Esophagus muscularis mucosa (tissue), 4 donors: ENCODE measurements at regions of chr4 and their contacts with region 1.

Region 1: DNA sequence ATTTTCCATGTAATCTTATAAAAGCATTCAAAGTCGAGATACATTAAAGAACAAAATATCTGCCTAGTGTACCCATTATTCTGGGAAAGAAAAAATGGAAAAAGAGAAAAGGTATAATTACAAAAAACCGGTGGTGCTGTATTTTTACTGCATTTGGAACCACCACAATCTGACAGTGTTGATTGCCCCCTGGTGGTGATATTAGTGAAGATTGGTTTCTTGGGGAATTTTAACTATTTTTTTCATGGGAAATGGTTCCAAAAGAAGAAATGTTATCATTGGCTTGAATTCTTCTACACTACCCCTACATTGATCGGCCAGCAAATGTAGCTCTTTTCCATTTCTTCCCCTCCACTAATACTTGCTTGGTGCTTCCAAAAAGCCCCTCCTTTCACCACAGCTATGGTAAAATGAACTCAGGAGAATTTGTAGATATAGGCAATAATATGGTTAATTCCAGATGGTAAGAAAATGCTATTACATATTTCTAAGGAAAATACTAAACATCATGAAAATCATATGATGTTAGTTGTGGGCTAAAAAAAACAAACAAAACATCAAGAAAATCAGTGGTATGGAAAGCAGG is 50.0 kb downstream of the COX18 start:
- DNase-seq: no peak
- H3K4me3 ChIP-seq: no peak overlapping the region
- H3K27ac ChIP-seq: no peak overlapping the region
- H3K4me1 ChIP-seq: no peaks in the 10 kb centered on the region
- H3K27me3 ChIP-seq: no peaks in the 10 kb centered on the region
- CTCF ChIP-seq: peak; percentile 62 to 76 (median 75)
- EP300 ChIP-seq: no peak
- POLR2A ChIP-seq: no peak

Region 2: DNA sequence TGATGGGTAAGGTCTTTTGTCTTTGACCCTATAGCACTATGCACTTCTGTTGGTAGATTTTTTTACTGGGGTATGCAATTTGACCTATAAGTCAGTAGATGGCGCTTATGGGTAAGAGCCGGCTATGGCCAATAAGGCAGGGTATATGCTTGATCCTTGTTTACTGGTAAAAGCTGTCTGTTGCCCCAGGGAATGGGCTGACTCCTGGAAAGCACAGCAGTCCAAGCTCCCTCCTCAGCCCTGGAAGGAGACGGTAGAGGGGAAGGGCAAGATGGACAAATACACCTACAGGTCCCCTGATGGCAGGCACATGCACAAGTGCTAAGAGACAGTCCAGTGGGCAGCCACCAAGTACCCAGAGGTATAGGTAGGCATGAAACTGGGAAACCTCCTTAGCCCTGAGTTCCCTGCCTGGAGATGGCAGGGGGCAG is 514.2 kb before region 1 on chr4:
- intact Hi-C with region 1: loop called (anchors 5 kb)
- DNase-seq: no peak
- H3K4me3 ChIP-seq: no peak overlapping the region
- H3K27ac ChIP-seq: no peak overlapping the region
- H3K4me1 ChIP-seq: no peaks in the 10 kb centered on the region
- H3K27me3 ChIP-seq: no peaks in the 10 kb centered on the region
- CTCF ChIP-seq: peak; percentile 55 to 73 (median 59)
- EP300 ChIP-seq: no peak
- POLR2A ChIP-seq: no peak

Region 3: GRCh38 chr4:72701987-72702819 is 317.4 kb before region 1 on chr4:
- intact Hi-C with region 1: loop called (anchors 2 kb)
- DNase-seq: no peak
- H3K4me3 ChIP-seq: peak overlapping the region; percentile 34 to 55 (median 40)
- H3K27ac ChIP-seq: no peak overlapping the region
- H3K4me1 ChIP-seq: peaks cover 0 to 13% (median 11%) of the 10 kb centered on the region in 4 donors
- H3K27me3 ChIP-seq: no peaks in the 10 kb centered on the region
- CTCF ChIP-seq: peak; percentile 58 to 63 (median 60)
- EP300 ChIP-seq: no peak
- POLR2A ChIP-seq: no peak